H1 (cell line): ENCODE measurements at regions of chr6 and their contacts with region 1.

Region 1: DNA sequence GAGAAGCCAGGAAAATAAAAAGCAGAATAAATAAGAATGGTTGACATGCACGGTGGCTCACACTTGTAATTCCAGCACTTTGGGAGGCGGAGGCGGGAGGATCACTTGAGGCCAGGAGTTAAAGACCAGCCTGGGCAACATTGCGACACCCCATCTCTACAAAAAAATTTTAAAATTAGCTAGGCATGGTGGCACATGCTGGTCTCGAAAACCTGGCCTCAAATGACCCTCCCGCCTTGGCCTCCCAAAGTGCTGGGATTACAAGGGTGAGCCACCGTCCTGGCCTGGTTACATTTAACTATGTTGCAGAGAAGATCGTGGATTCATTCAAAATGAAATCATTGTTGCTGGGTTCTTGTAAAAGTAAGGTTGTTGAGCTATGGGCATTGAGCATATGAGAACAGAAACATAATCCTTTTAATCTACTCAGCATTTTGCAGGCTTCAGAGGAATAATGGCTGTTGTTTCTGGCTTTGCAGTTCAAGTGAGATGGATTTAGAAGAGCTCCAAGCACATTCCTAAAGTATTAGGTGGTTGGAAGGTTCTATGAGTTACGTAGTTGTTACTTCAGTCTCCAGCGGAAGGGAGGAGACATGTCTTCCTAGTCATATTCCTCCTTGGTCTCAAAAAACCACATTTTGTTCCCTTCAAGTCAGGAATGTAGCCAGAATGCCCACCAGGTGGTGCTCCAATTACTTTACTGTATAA is 45.6 kb upstream of the RAB23 start:
- DNase-seq: peak in 1 of 2 experiments; percentile 52
- H3K4me3 ChIP-seq: no peak overlapping the region
- H3K27ac ChIP-seq: no peak overlapping the region
- H3K4me1 ChIP-seq: no peaks in the 10 kb centered on the region
- H3K27me3 ChIP-seq: no peaks in the 10 kb centered on the region
- CTCF ChIP-seq: peak in 2 of 3 experiments; percentile 52 to 62; a peak in 3 of 4 replicates
- EP300 ChIP-seq: no peak
- POLR2A ChIP-seq: no peak
- RAD21 ChIP-seq: peak; percentile 54 to 63

Region 2: GRCh38 chr6:57158658-57159057 is 109.1 kb before region 1 on chr6:
- CTCF ChIA-PET with region 1: no interaction called
- POLR2A ChIA-PET with region 1: no interaction called
- DNase-seq: no peak
- H3K4me3 ChIP-seq: no peak overlapping the region
- H3K27ac ChIP-seq: no peak overlapping the region
- H3K4me1 ChIP-seq: no peaks in the 10 kb centered on the region
- H3K27me3 ChIP-seq: no peaks in the 10 kb centered on the region
- CTCF ChIP-seq: no peak
- EP300 ChIP-seq: no peak
- POLR2A ChIP-seq: no peak
- RAD21 ChIP-seq: no peak

Region 3: GRCh38 chr6:57221936-57222742 is 45.6 kb before region 1 on chr6 and contains the start of gene RAB23:
- CTCF ChIA-PET with region 1: no interaction called
- POLR2A ChIA-PET with region 1: no interaction called
- DNase-seq: peak; percentile 54 to 96
- H3K4me3 ChIP-seq: peak within 1 kb of the TSS; percentile 81 to 93 (median 90)
- H3K27ac ChIP-seq: peak within 1 kb of the TSS; percentile 80
- H3K4me1 ChIP-seq: peaks cover 0 to 3% (median under 1%) of the 10 kb centered on the region in 4 experiments; a peak in 2 of 7 replicates
- H3K27me3 ChIP-seq: no peaks in the 10 kb centered on the region
- CTCF ChIP-seq: no peak
- EP300 ChIP-seq: no peak
- POLR2A ChIP-seq: peak; percentile 64 to 70
- RAD21 ChIP-seq: no peak
- total RNA-seq, gene RAB23: 17.2 and 17.5 TPM in 2 replicates

Region 4: DNA sequence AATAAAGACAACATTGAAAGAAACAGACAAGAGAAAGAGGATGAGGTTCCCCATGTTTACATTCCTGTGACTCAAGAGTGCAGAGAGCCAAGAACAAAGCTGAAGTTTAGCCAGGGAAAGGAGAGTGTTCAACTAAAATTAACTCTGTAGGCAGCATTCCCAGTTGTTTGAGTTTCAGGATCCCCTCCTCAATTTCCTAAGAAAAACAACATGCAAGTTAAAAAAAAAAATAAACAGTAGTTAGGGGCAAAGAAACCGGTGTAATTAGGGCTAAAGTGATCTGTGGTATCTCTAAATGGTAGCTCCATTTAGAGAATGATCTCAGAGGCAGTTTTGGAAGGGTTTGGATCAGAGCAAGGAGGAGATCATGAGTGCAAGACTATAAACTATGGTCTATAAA is 14.8 kb before region 1 on chr6:
- CTCF ChIA-PET with region 1: interaction called, 14 read pairs
- POLR2A ChIA-PET with region 1: no interaction called
- DNase-seq: no peak
- H3K4me3 ChIP-seq: no peak overlapping the region
- H3K27ac ChIP-seq: no peak overlapping the region
- H3K4me1 ChIP-seq: no peaks in the 10 kb centered on the region
- H3K27me3 ChIP-seq: no peaks in the 10 kb centered on the region
- CTCF ChIP-seq: no peak
- EP300 ChIP-seq: no peak
- POLR2A ChIP-seq: no peak
- RAD21 ChIP-seq: no peak

Region 5: DNA sequence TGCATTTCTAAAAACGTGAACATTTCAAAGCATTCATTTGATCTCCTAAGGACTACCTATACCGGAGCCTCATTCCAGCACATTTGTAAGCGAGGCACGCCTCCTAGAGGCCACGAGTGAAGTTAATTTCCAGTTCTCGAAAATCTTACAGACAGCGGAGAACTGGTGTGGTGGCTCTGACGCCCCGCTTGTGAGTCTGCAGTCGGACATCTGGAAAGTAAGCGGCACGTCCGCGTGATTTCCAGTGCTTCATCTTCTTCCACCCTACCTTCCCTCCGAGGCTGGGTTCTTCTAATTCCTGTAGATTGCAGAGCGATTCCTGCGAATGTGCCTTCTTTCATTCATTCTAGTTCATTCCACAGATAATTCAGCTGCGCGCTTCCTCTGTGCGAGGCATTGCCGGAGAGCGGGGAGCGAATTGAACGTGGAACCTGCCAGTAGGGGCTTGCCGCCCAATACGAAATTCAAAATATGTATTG is 48.9 kb after region 1 on chr6:
- CTCF ChIA-PET with region 1: interaction called, 30 read pairs
- POLR2A ChIA-PET with region 1: interaction called, 3 read pairs
- DNase-seq: peak; percentile 56 to 81
- H3K4me3 ChIP-seq: peak overlapping the region; percentile 77 to 83 (median 80)
- H3K27ac ChIP-seq: no peak overlapping the region
- H3K4me1 ChIP-seq: no peaks in the 10 kb centered on the region
- H3K27me3 ChIP-seq: no peaks in the 10 kb centered on the region
- CTCF ChIP-seq: peak; percentile 40 to 87 (median 84)
- EP300 ChIP-seq: no peak
- POLR2A ChIP-seq: no peak
- RAD21 ChIP-seq: peak; percentile 98 to 99

Region 6: GRCh38 chr6:57324538-57324937 is 56.8 kb after region 1 on chr6:
- CTCF ChIA-PET with region 1: interaction called, 15 read pairs
- POLR2A ChIA-PET with region 1: no interaction called
- DNase-seq: no peak
- H3K4me3 ChIP-seq: no peak overlapping the region
- H3K27ac ChIP-seq: no peak overlapping the region
- H3K4me1 ChIP-seq: no peaks in the 10 kb centered on the region
- H3K27me3 ChIP-seq: no peaks in the 10 kb centered on the region
- CTCF ChIP-seq: peak in 1 of 3 experiments; percentile 8; a peak in 2 of 4 replicates
- EP300 ChIP-seq: no peak
- POLR2A ChIP-seq: no peak
- RAD21 ChIP-seq: peak in 1 of 2 experiments; percentile 31; a peak in 2 of 4 replicates